ENCODE measurements at regions of chr9 and their contacts with region 1.

Region 1: DNA sequence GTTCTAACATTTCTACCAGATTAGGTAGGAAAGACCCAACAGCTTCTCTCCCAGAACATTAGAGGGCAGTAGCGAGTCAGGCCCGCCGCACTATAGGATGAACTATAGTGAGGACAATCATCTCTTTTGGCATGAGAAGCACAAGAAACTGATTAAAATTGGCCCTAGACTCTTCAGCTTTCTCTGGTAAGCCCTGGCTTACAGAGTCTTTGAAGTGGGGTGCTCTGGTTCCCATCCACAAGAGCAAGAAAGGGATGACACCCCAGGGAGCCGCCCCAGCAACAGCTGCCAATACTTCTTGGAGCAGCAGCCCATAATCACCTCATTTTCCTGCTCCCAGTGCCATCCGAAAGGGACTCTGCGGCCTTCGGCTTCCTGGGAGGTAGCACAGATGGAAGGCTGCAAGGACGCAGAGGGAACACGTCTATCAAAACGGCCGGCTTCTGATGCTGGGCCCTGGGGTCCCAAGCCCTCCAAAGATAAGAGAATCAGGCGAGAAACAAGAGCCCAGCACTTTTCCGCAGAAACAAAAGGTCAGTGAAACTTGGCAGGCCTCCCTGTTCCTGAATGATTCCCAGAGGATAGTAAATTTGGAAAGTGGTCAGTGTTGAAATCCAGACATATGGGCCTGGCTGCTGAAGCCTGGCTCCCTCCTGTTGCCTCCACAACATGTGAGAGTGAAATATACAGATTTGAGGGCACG is 69.3 kb downstream of the HSD17B3 start:
- DNase-seq: no peak
- H3K4me3 ChIP-seq: no peak overlapping the region
- H3K27ac ChIP-seq: no peak overlapping the region
- H3K4me1 ChIP-seq: no peaks in the 10 kb centered on the region
- H3K27me3 ChIP-seq: no peaks in the 10 kb centered on the region
- CTCF ChIP-seq: peak; percentile 15 to 70 (median 58)
- POLR2A ChIP-seq: no peak

Region 2: DNA sequence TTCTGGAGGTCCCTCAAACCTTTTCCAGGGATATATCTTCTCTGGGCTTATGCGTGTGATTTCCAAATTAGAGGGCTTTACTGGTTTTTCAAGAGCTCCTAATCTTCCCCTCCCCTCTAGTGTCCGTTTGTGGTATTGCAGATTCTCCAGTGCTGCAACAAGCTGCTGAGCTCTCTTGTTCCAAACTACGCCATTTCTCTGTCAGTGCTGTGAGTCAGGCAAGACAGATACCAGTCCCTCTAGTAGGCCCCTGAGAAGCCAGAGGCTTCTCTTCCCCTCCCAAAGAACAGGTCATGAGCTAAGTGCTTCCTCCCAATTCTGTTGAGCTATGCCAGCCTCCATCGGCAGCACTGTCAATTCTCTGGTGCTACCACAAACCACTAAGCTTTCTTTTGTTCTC is 1064.7 kb before region 1 on chr9:
- intact Hi-C with region 1: loop called (anchors 10 kb)
- DNase-seq: peak; percentile 40
- H3K4me3 ChIP-seq: no peak overlapping the region
- H3K27ac ChIP-seq: no peak overlapping the region
- H3K4me1 ChIP-seq: no peaks in the 10 kb centered on the region
- H3K27me3 ChIP-seq: no peaks in the 10 kb centered on the region
- CTCF ChIP-seq: peak; percentile 63 to 77 (median 70)
- POLR2A ChIP-seq: no peak

Region 3: DNA sequence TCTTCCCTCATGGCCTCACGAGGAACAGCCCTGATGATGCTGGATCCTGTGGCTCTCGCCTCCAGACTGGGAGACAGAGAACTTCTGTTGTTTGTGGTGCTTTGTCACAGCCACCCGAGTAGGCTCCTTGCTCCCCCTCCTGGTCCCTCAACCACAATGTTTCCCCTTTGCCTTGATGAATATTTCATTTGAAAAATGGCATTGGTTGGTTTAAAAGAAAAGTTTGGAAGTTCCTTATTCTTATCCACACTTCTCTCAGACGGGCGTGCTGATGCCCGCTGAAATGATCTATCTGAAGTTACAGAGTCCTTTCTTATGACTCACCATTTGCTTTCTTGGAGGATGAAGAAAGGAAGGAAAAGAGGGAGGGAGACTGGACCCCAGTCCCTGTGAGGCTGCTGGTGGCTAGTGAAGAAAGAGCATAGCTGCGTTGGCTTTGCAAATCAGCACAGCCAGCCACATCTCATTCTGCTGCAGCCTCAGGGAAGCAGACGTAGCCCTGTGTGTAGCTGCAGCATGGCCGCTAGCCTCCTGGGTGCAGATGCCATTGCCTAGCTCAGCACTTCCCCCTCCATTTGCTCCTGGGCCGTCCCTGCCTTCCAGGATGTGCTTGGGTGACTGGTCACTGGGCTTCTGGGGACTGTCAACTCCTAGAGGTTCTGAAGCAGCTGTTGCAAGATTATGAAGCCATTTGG is 171.2 kb before region 1 on chr9:
- intact Hi-C with region 1: no loop called
- DNase-seq: peak; percentile 38
- H3K4me3 ChIP-seq: no peak overlapping the region
- H3K27ac ChIP-seq: peak overlapping the region in 1 of 2 donors; percentile 6
- H3K4me1 ChIP-seq: no peaks in the 10 kb centered on the region
- H3K27me3 ChIP-seq: no peaks in the 10 kb centered on the region
- CTCF ChIP-seq: peak in 3 of 4 experiments; percentile 28 to 59 (median 56)
- POLR2A ChIP-seq: no peak

Region 4: GRCh38 chr9:96158909-96159575 is 73.6 kb before region 1 on chr9:
- intact Hi-C with region 1: no loop called
- DNase-seq: no peak
- H3K4me3 ChIP-seq: no peak overlapping the region
- H3K27ac ChIP-seq: no peak overlapping the region
- H3K4me1 ChIP-seq: no peaks in the 10 kb centered on the region
- H3K27me3 ChIP-seq: no peaks in the 10 kb centered on the region
- CTCF ChIP-seq: no peak
- POLR2A ChIP-seq: no peak

Region 5: DNA sequence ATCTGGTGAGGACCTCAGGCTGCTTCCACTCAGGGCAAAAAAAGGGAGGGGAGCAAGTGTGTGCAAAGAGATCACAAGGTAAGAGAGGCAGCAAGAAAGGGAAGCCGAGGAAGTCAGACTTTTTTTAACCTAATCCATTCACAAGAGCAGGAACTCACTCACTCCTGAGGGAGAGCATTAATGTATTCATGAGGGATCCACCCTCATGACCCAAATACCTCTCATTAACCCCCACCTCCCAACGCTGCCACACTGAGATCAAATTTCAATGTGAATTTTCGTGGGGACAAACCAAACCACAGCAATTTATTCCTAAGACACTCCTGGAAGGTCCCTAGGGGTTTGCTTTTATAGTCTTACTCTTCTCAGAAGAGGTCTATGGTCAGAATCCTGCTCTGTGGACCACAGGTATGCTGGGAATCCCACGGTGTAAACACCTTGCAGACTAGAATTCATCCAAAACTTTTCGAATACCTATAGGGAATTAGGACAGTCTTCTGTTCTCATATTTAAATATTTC is 39.4 kb before region 1 on chr9:
- intact Hi-C with region 1: no loop called
- DNase-seq: no peak
- H3K4me3 ChIP-seq: no peak overlapping the region
- H3K27ac ChIP-seq: no peak overlapping the region
- H3K4me1 ChIP-seq: no peaks in the 10 kb centered on the region
- H3K27me3 ChIP-seq: no peaks in the 10 kb centered on the region
- CTCF ChIP-seq: no peak
- POLR2A ChIP-seq: no peak

Region 6: GRCh38 chr9:96317335-96317980 is 84.8 kb after region 1 on chr9:
- intact Hi-C with region 1: loop called (anchors 5 kb)
- DNase-seq: peak; percentile 32
- H3K4me3 ChIP-seq: no peak overlapping the region
- H3K27ac ChIP-seq: no peak overlapping the region
- H3K4me1 ChIP-seq: no peaks in the 10 kb centered on the region
- H3K27me3 ChIP-seq: no peaks in the 10 kb centered on the region
- CTCF ChIP-seq: peak; percentile 73 to 91 (median 76)
- POLR2A ChIP-seq: no peak

Region 7: DNA sequence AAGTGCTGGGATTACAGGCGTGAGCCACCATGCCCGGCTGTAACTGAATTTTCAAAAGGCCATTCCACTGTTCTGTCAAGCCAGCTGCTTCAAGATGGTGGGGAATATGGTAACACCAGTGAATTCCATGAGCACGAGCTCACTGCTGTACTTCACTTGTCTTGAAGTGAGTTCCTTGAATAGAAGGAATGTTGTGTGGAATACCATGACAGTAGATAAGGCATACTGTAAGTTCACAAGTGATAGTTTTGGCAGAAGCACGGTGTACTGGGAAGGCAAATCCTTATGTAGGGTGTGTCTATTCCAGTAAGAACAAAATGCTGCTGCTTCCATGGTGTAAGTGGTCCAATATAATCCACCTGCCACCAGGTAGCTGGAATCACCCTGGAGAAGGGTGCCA is 429.0 kb after region 1 on chr9:
- intact Hi-C with region 1: loop called (anchors 10 kb)
- DNase-seq: no peak
- H3K4me3 ChIP-seq: no peak overlapping the region
- H3K27ac ChIP-seq: no peak overlapping the region
- H3K4me1 ChIP-seq: no peaks in the 10 kb centered on the region
- H3K27me3 ChIP-seq: no peaks in the 10 kb centered on the region
- CTCF ChIP-seq: no peak
- POLR2A ChIP-seq: no peak